ENCODE measurements at regions of chr4 and their contacts with region 1.

Region 1: DNA sequence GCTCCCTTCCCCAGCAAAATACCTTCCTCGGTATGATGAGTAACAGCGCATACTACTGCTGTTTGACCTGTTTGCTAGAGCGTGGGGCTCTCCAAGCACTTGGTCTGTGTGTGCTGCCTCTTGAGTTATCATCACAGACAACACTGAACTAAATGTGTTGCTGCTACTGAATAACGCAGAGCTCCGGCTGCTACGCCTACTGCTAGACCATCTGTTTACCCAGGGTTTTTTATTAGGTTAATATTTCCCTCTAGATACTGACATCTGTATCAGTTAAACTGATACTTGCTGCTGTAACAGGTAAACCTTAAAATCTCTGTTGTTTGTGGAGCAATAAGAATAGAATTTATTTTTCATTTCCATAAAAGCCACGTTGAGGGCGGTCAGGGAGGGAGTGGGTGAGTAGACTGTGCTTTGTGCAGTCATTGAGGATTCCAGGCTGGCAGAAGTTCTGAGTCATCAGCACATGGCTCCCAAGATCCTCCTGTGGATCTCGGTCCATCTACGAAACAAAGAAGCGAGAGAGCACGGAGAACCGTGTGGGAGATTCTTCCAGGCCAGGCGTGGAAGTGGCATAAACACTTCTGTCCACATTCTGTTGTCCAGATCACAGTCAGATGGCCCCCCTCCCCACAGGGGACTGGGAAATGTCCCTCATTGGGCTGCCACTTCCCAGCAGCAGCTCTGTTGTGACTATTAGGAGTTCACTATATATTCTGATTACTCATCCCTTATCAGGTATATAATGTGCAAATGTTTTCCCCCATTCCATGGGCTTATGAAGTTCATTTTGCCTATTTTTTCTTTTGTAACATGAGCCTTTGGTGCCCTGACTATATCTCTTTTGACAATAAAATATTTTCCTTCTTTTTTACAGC is 14.1 kb downstream of the GRK4 start:
- DNase-seq: no peak
- ATAC-seq: no peak
- H3K4me3 Mint-ChIP-seq: no peak overlapping the region
- H3K27ac Mint-ChIP-seq: no peak overlapping the region
- H3K4me1 Mint-ChIP-seq: peaks cover 4% of the 10 kb centered on the region
- H3K27me3 Mint-ChIP-seq: peaks cover 1% of the 10 kb centered on the region
- CTCF ChIP-seq: no peak

Region 2: DNA sequence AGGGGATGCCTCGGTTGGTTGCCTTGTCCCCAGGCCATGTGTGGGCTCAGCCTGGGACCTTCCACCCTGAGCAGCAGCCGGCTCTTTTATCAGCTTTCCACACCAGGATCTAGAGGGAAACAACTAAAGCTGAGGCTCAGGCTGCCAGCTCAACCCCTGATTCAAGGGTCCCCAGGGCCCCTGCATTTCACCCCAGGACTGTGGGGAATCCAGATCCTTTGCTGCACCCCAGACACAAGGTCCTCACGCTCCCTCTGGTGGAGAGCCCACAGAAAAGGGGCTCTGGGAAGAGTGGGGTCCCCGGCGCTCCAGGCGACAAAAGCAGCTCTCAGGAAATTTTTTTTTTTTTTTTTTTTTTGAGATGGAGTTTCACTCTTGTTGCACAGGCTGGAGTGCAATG is 623.3 kb before region 1 on chr4:
- CTCF ChIA-PET with region 1: no interaction called
- POLR2A ChIA-PET with region 1: no interaction called
- intact Hi-C with region 1: no loop called
- DNase-seq: peak; percentile 41
- ATAC-seq: peak; percentile 51
- H3K4me3 Mint-ChIP-seq: no peak overlapping the region
- H3K27ac Mint-ChIP-seq: no peak overlapping the region
- H3K4me1 Mint-ChIP-seq: peaks cover 8% of the 10 kb centered on the region
- H3K27me3 Mint-ChIP-seq: no peaks in the 10 kb centered on the region
- CTCF ChIP-seq: peak; percentile 61

Region 3: DNA sequence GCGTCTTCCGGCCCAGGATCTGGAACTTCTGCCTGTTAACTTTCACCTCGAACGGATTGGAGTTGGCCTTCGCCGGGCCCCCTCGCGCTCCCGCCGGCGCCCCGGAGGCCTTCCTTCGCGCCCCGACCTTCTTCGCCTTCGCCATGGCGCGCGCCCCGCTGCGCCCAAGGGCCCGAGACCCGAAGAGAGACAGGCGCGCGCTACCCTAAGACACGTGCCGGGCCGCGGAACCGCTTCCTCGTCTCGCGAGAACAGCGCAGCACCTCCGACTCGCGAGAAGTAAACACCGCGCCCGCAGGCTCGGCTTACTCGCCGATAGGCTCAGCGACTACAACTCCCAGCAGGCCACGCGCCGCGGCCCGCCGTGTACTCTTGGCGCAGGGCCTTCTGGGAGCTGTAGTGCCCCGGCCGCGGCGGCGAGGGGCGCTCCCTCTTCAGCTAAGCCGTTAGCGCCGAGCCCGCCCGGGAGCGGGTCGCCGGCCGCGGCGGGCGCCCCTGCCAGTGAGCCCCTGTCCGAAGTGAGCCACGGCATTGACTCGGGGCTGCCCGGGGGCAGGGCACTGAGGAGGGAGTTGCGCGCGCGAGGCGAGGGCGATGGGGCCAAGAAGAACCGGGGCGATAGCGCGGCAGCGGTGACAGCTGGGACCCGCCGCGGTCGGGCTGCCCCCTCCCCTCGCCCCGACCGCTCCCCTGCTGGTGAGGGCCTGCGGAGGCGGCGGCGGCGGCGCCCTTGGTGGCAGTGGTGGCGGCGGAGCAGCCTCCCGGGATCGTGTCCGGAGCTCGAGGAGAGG is 14.1 kb before region 1 on chr4 and contains the starts of genes GRK4 and NOP14:
- CTCF ChIA-PET with region 1: interaction called, 34 read pairs
- POLR2A ChIA-PET with region 1: interaction called, 4 read pairs
- intact Hi-C with region 1: no loop called
- DNase-seq: peak; percentile 99
- ATAC-seq: peak; percentile 89
- H3K4me3 Mint-ChIP-seq: peak within 1 kb of the TSS; percentile 83
- H3K27ac Mint-ChIP-seq: peak within 1 kb of the TSS; percentile 94
- H3K4me1 Mint-ChIP-seq: peaks cover 32% of the 10 kb centered on the region
- H3K27me3 Mint-ChIP-seq: no peaks in the 10 kb centered on the region
- CTCF ChIP-seq: no peak
- total RNA-seq, gene GRK4: 2.8 to 3.0 TPM
- total RNA-seq, gene NOP14: 76.8 to 77.3 TPM

Region 4: DNA sequence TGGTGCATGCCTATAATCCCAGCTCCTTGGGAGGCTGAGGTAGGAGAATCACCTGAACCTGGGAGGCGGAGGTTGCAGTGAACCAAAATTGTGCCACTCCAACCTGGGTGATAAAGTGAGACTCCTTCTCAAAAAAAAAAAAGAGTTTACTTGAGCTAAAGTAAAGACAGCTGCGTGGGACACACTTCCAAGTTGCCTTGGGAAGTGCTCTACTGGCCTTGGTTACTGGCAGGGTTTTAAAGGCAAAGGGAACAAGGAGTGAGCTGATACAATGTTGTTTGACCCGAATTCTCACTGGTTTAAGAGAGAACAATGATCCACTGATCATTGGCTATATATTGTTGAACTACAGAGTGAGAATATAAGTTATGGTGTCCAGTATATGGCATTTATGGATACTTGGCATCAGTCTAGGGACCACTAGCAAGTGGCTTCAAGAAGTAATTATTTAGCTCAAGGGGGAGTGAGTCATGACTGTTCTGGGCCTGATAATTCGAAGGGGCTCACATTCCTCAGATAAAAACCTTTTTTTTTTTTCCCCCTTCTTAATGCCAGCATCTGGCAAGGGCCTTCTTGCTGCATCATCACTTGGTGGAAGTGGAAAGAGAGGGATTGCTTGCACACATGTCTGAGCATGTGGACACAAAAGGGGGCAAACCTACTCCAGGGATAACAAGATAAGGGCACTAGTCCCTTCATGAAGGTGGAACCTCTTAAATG is 18.3 kb after region 1 on chr4:
- CTCF ChIA-PET with region 1: interaction called, 37 read pairs
- POLR2A ChIA-PET with region 1: no interaction called
- intact Hi-C with region 1: no loop called
- DNase-seq: no peak
- ATAC-seq: no peak
- H3K4me3 Mint-ChIP-seq: no peak overlapping the region
- H3K27ac Mint-ChIP-seq: no peak overlapping the region
- H3K4me1 Mint-ChIP-seq: no peaks in the 10 kb centered on the region
- H3K27me3 Mint-ChIP-seq: peaks cover 2% of the 10 kb centered on the region
- CTCF ChIP-seq: no peak

Region 5: GRCh38 chr4:3009422-3009821 is 32.0 kb after region 1 on chr4:
- CTCF ChIA-PET with region 1: interaction called, 17 read pairs
- POLR2A ChIA-PET with region 1: no interaction called
- intact Hi-C with region 1: no loop called
- DNase-seq: peak; percentile 39
- ATAC-seq: peak; percentile 68
- H3K4me3 Mint-ChIP-seq: no peak overlapping the region
- H3K27ac Mint-ChIP-seq: no peak overlapping the region
- H3K4me1 Mint-ChIP-seq: peaks cover 8% of the 10 kb centered on the region
- H3K27me3 Mint-ChIP-seq: no peaks in the 10 kb centered on the region
- CTCF ChIP-seq: peak; percentile 29

Region 6: DNA sequence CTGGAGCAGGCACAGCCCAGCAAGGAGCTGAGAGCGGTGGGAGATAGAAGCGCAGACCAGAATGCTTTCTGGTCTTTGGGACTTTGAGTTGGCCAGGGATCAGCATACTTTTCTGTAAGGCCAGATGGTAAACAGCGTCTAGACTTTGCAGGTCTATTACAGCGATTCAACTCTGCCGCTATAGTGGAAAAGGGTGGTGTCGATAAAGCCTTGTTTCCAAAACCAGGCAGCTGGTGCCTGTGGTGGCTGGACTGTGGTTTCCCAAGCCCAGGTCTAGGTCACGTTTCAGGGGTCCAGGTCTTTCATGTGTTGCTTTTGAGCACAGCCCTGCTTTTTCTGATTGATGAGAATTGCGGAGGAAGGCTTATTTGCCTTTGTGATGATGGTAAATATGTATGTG is 56.8 kb after region 1 on chr4:
- CTCF ChIA-PET with region 1: interaction called, 16 read pairs
- POLR2A ChIA-PET with region 1: no interaction called
- intact Hi-C with region 1: loop called (anchors 5 kb)
- DNase-seq: no peak
- ATAC-seq: no peak
- H3K4me3 Mint-ChIP-seq: no peak overlapping the region
- H3K27ac Mint-ChIP-seq: no peak overlapping the region
- H3K4me1 Mint-ChIP-seq: peaks cover 17% of the 10 kb centered on the region
- H3K27me3 Mint-ChIP-seq: peaks cover 12% of the 10 kb centered on the region
- CTCF ChIP-seq: no peak

Region 7: DNA sequence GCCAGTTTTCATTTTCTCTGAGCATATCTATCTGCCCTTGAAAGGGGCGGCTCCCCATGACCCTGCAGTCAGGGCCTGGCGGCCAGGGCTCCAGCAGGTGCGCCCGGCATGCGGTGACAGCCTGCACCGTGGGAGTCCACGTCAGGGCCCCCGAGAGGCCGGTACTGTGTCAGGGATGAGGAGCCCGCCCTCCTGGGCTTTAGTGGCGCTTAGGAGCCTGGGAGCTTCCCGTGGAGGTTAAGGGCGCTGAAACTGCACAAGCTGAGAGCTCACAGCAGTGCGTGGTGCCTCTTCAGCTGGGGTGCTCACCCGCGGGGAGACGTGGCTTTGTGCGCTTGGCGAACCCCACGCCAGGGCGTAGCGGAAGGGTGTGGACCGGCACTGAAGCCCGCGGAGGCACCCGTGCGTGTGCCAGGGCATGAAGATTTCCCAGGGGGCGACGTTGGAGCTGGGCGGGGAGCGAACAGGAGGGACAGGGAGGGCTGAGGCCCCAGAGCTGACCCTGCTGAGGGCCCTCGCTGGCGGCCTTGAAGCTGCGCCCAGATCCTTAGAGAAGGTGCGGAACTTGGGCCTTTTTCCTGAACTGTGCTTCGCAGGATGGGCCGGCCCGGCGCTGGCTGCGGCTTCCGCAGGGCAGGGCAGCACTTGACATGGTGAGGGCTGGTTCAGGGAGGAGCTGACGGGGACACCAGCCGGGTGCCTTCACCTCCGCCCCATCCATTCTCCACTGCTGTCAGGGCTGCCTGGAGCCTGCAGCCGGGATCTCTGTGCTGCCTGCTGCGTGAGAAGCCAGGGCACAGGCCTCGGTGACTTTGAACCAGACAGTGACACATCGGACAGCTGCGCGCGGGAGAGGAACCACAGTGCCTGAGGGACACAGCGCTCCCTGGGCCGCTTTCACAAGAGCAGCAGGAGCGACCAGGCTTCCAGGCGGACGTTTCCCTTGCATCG is 64.0 kb after region 1 on chr4:
- CTCF ChIA-PET with region 1: interaction called, 14 read pairs
- POLR2A ChIA-PET with region 1: no interaction called
- intact Hi-C with region 1: loop called (anchors 5 kb)
- DNase-seq: peak; percentile 55
- ATAC-seq: peak; percentile 59
- H3K4me3 Mint-ChIP-seq: peak overlapping the region; percentile 81
- H3K27ac Mint-ChIP-seq: peak overlapping the region; percentile 84
- H3K4me1 Mint-ChIP-seq: peaks cover 52% of the 10 kb centered on the region
- H3K27me3 Mint-ChIP-seq: peaks cover 12% of the 10 kb centered on the region
- CTCF ChIP-seq: no peak

Measured in activated CD8-positive, alpha-beta T cell treated with anti-CD3 and anti-CD28 coated beads for 36 hours (primary cell).